ENCODE measurements at regions of chr2 and their contacts with region 1.

Region 1: GRCh38 chr2:37993143-37993542 is 68.1 kb downstream of the RMDN2 start:
- DNase-seq: no peak
- ATAC-seq: no peak
- H3K4me3 ChIP-seq: no peak overlapping the region
- H3K27ac ChIP-seq: peak overlapping the region in 1 of 4 donors; percentile 41
- H3K4me1 ChIP-seq: no peaks in the 10 kb centered on the region
- H3K27me3 ChIP-seq: no peaks in the 10 kb centered on the region
- CTCF ChIP-seq: peak in 3 of 7 experiments; percentile 7 to 21 (median 10)
- POLR2A ChIP-seq: no peak

Region 2: DNA sequence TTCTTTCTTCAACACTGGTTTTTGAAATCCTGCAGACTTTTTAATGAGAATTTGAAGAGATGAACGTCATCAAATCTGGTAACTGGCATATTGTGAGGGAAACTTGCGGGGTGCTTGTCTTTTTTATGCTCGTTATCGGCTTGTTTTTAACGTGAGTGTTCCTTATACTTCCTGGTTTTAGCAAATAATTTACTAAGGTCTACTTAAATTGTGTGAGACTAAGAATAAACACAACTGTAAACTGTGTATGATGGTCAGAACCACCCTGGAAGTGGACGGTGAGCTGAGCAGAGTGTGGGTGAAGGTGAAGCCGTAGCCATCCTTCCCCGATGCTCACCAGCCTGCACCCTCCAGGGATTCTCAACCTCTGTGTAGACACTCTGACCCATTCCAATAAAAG is 239.4 kb before region 1 on chr2:
- intact Hi-C with region 1: no loop called
- DNase-seq: no peak
- ATAC-seq: no peak
- H3K4me3 ChIP-seq: no peak overlapping the region
- H3K27ac ChIP-seq: no peak overlapping the region
- H3K4me1 ChIP-seq: no peaks in the 10 kb centered on the region
- H3K27me3 ChIP-seq: no peaks in the 10 kb centered on the region
- CTCF ChIP-seq: no peak
- POLR2A ChIP-seq: no peak

Region 3: GRCh38 chr2:38128653-38129052 is 135.5 kb after region 1 on chr2:
- intact Hi-C with region 1: loop called (anchors 10 kb)
- DNase-seq: peak in 1 of 4 donors; percentile 75
- ATAC-seq: peak; percentile 53
- H3K4me3 ChIP-seq: no peak overlapping the region
- H3K27ac ChIP-seq: peak overlapping the region in 1 of 4 donors; percentile 55
- H3K4me1 ChIP-seq: no peaks in the 10 kb centered on the region
- H3K27me3 ChIP-seq: no peaks in the 10 kb centered on the region
- CTCF ChIP-seq: no peak
- POLR2A ChIP-seq: no peak